ENCODE measurements at regions of chr12 and their contacts with region 1.

Region 1: DNA sequence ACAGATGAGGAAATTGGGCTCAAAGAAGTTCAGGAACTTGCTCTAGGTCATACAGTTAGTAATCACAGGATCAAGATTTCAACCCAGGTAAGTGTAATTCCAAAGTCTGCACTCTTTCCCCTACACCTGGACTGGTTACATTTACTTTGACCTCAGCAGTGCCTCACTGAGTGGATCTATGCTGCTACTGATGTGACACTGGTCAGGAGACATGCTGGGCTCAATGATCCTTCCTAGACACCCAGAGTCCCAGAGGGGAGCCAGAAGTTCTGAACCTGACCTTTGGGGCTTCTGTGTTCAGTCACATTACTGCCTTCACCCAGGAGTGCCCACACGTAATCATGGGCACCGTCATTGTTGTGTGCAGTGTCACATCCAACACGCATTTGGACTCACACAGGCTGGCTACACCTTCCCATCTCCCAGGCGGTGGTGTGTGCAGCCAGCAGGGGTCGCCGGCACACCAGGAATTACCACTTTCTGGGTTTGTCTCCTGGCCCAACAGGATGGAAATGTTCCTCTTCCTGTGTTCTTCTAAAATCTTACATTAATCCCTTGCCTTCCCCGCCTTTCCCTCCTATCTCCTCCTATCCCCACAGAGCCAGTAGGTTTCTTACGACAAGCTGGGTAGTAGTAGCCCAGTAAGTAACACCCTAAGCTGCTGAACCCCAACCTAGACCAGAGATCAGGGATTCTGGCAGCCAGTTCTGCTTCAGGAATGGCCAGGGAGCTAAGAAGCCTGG is 25.6 kb downstream of the CALCOCO1 start:
- DNase-seq: peak; percentile 56
- ATAC-seq: peak; percentile 85
- H3K4me3 Mint-ChIP-seq: no peak overlapping the region
- H3K27ac Mint-ChIP-seq: no peak overlapping the region
- H3K4me1 Mint-ChIP-seq: peaks cover 4% of the 10 kb centered on the region
- H3K27me3 Mint-ChIP-seq: peaks cover 71% of the 10 kb centered on the region
- CTCF ChIP-seq: peak; percentile 65

Region 2: GRCh38 chr12:53561590-53561953 is 140.1 kb before region 1 on chr12:
- CTCF ChIA-PET with region 1: no interaction called
- POLR2A ChIA-PET with region 1: no interaction called
- intact Hi-C with region 1: no loop called
- DNase-seq: no peak
- ATAC-seq: no peak
- H3K4me3 Mint-ChIP-seq: no peak overlapping the region
- H3K27ac Mint-ChIP-seq: no peak overlapping the region
- H3K4me1 Mint-ChIP-seq: peaks cover 11% of the 10 kb centered on the region
- H3K27me3 Mint-ChIP-seq: no peaks in the 10 kb centered on the region
- CTCF ChIP-seq: no peak

Region 3: GRCh38 chr12:54214553-54215406 is 513.1 kb after region 1 on chr12:
- CTCF ChIA-PET with region 1: no interaction called
- POLR2A ChIA-PET with region 1: no interaction called
- intact Hi-C with region 1: loop called (anchors 5 kb)
- DNase-seq: peak; percentile 87
- ATAC-seq: peak; percentile 85
- H3K4me3 Mint-ChIP-seq: peak overlapping the region; percentile 83
- H3K27ac Mint-ChIP-seq: no peak overlapping the region
- H3K4me1 Mint-ChIP-seq: peaks cover 45% of the 10 kb centered on the region
- H3K27me3 Mint-ChIP-seq: peaks cover 5% of the 10 kb centered on the region
- CTCF ChIP-seq: peak; percentile 97

Measured in activated B cell treated with CpG ODN at 0.5 μM for 24 hours (primary cell).